ENCODE measurements at regions of chr16 and their contacts with region 1.

Region 1: GRCh38 chr16:89667633-89668032 is 10.0 kb downstream of the SPATA33 start:
- DNase-seq: no peak
- ATAC-seq: 0 out of 2 replicates have a peak, but pooled peaks have one; percentile 35
- H3K4me3 ChIP-seq: no peak overlapping the region
- H3K27ac ChIP-seq: no peak overlapping the region
- H3K4me1 ChIP-seq: peaks cover 0 to 5% of the 10 kb centered on the region in 2 experiments; a peak in 1 of 4 replicates
- H3K27me3 ChIP-seq: no peaks in the 10 kb centered on the region
- CTCF ChIP-seq: no peak
- POLR2A ChIP-seq: no peak
- RAD21 ChIP-seq: no peak

Region 2: DNA sequence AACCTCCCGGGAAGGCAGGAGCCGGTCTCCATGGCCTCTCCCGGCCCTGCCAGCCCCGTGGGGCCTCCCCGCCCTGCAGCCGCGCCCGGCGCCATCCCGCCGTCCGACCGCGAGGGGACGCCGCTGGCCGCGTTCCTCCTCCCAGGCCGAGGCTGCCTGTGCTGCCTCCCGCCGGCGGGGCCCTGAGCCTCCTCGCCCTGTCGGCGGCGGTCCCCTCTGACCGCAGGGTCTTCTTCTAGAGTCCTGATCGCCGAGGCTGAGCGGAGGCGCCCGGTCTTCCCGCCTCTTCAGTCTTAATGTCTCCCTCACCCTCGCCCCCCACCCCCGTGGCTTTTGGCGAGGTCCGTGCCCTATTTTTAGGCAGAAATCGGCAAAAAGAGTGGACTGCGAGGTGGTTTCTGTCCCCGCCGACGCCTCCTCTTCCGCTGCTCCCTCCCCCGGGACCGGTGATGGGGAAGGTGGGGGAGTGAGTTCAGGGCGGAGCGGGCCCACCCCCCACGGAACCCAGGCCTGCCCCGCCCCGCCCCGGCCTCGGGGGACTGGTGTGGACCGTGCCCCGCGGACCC is 92.9 kb before region 1 on chr16:
- CTCF ChIA-PET with region 1: no interaction called
- POLR2A ChIA-PET with region 1: no interaction called
- RAD21 ChIA-PET with region 1: interaction called in 1 of 2 experiments, 3 read pairs
- intact Hi-C with region 1: loop called (anchors 2 kb)
- DNase-seq: peak; percentile 57
- ATAC-seq: peak; percentile 83
- H3K4me3 ChIP-seq: peak overlapping the region; percentile 71 to 97
- H3K27ac ChIP-seq: peak overlapping the region; percentile 99
- H3K4me1 ChIP-seq: peaks cover 14 to 35% of the 10 kb centered on the region in 2 experiments
- H3K27me3 ChIP-seq: no peaks in the 10 kb centered on the region
- CTCF ChIP-seq: peak in 2 of 3 experiments; percentile 90 to 91; a peak in 4 of 6 replicates
- POLR2A ChIP-seq: peak; percentile 26
- RAD21 ChIP-seq: no peak

Region 3: DNA sequence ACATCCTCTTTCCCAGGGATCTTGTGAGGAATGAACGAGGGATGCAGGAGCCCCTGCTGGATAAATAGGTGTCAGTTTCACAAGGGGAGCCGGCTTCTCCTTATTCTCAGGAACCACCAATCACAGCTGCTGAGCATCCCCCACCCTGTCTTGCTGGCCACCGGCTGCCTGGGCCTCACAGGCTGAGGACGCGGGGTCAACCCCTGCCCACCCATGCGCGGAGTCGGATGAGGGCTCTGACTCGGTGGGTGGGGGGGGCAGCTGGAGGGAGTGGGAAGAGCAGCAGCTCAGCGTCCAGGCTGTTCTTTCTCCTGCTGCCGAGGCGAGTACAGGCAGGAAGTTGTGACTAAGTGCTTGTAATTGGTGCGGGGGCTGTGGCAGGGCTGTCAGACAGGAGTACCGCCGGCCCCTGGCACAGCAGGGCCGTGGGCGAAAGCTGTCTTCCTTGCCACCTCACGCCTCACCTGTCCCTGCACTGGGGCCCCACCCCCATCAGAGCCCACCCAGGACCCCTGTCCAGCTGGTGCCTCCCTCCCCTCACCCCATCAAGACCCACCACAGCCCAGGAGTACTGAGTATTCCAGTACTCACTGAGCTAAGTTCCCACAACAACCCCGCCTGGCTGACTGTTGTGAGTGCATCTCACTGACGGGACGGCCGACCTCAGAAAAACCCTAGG is 65.2 kb before region 1 on chr16:
- CTCF ChIA-PET with region 1: no interaction called
- POLR2A ChIA-PET with region 1: no interaction called
- RAD21 ChIA-PET with region 1: no interaction called
- intact Hi-C with region 1: loop called (anchors 2 kb)
- DNase-seq: peak; percentile 24
- ATAC-seq: peak; percentile 71
- H3K4me3 ChIP-seq: peak overlapping the region; percentile 19 to 49
- H3K27ac ChIP-seq: peak overlapping the region; percentile 43
- H3K4me1 ChIP-seq: peaks cover 28 to 52% of the 10 kb centered on the region in 2 experiments
- H3K27me3 ChIP-seq: no peaks in the 10 kb centered on the region
- CTCF ChIP-seq: no peak
- POLR2A ChIP-seq: no peak
- RAD21 ChIP-seq: no peak

Measured in HCT116 (cell line).